Body of pancreas (tissue), 4 donors: ENCODE measurements at regions of chr11 and their contacts with region 1.

Region 1: GRCh38 chr11:2428322-2428795 is 16.0 kb downstream of the TRPM5 start:
- DNase-seq: peak; percentile 86 to 89 (median 88)
- ATAC-seq: peak; percentile 77
- H3K4me3 ChIP-seq: no peak overlapping the region
- H3K27ac ChIP-seq: no peak overlapping the region
- H3K4me1 ChIP-seq: no peaks in the 10 kb centered on the region
- H3K27me3 ChIP-seq: no peaks in the 10 kb centered on the region
- CTCF ChIP-seq: peak; percentile 90 to 100 (median 96)
- POLR2A ChIP-seq: no peak

Region 2: DNA sequence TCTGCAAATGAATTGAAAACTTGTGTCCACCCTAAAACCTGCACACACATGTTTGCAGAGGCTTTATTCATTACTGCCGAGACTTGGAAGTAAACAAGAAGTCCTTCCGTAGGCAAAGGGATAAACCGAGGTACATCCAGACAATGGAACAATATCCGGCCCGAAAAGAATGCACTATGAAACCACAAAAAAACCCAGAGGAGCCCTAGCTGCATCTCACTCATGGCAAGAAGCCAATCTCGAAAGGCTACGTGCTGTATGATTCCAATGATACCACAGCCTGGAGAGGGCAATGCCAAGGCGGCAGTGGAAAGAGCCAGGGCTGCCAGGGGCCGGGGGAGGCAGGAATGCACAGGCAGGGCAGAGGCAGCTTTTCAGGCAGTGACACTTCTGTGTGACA is 484.4 kb before region 1 on chr11:
- intact Hi-C with region 1: no loop called
- DNase-seq: peak in 1 of 4 donors; percentile 8
- ATAC-seq: no peak
- H3K4me3 ChIP-seq: no peak overlapping the region
- H3K27ac ChIP-seq: no peak overlapping the region
- H3K4me1 ChIP-seq: no peaks in the 10 kb centered on the region
- H3K27me3 ChIP-seq: no peaks in the 10 kb centered on the region
- CTCF ChIP-seq: no peak
- POLR2A ChIP-seq: no peak

Region 3: DNA sequence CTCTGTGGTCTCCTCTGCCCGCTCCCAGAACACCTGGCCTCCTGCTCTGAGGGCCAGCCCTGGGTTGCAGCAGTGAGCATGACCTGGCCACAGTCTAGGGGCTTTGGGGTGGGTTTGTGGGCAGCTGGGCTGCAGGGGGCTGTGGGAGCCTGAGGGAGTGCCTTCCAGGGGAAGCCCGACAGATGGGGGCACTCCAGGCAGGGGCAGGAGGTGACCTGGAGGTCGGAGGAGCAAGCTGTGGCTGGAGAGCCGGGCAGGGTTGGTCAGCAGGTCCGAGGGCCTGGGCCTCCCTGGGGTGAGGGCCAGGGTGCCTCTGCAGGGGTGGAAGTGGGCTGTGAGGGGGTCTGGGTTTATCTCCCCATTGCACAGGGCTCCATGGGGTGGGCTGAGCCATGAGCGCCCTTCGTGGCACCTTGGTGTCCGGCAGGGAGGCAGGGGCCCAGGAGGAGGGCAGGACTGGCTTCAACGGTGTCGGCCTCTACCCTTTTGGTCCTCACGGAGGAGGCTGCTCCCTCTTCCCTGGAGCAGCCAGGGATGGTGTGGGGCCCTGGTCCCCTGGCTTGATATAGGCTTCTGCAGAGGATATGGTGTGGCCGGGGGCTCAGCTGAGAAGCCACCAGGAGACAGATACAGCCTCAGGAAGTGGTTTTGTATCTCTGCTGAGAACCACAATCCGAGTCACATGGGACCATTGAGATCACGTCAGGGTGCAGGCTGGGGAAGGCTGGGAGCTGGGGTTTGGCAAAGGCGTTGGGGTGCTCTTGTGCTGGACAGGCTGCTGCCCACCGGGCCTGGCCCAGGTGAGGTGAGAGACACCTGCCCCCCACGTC is 38.7 kb after region 1 on chr11:
- intact Hi-C with region 1: no loop called
- DNase-seq: peak in 2 of 4 donors; percentile 8 to 15
- ATAC-seq: no peak
- H3K4me3 ChIP-seq: no peak overlapping the region
- H3K27ac ChIP-seq: peak overlapping the region in 1 of 4 donors; percentile 99
- H3K4me1 ChIP-seq: peaks cover 51% of the 10 kb centered on the region
- H3K27me3 ChIP-seq: no peaks in the 10 kb centered on the region
- CTCF ChIP-seq: no peak
- POLR2A ChIP-seq: no peak

Region 4: GRCh38 chr11:2892215-2893020 is 464.1 kb after region 1 on chr11:
- intact Hi-C with region 1: loop called (anchors 5 kb)
- DNase-seq: peak in 1 of 4 donors; percentile 21
- ATAC-seq: no peak
- H3K4me3 ChIP-seq: no peak overlapping the region
- H3K27ac ChIP-seq: peak overlapping the region in 2 of 4 donors; percentile 12 to 24
- H3K4me1 ChIP-seq: peaks cover 29% of the 10 kb centered on the region
- H3K27me3 ChIP-seq: no peaks in the 10 kb centered on the region
- CTCF ChIP-seq: peak; percentile 66 to 87 (median 81)
- POLR2A ChIP-seq: no peak